ENCODE measurements at regions of chr5 and their contacts with region 1.

Region 1: GRCh38 chr5:172707285-172708182 is 63.5 kb downstream of the DUSP1 start:
- DNase-seq: no peak
- ATAC-seq: peak; percentile 84
- H3K4me3 ChIP-seq: no peak overlapping the region
- H3K27ac ChIP-seq: no peak overlapping the region
- H3K4me1 ChIP-seq: no peaks in the 10 kb centered on the region
- H3K27me3 ChIP-seq: no peaks in the 10 kb centered on the region
- CTCF ChIP-seq: peak; percentile 35 to 63 (median 52); a peak in 4 of 6 replicates
- EP300 ChIP-seq: no peak
- POLR2A ChIP-seq: no peak
- RAD21 ChIP-seq: peak; percentile 57

Region 2: DNA sequence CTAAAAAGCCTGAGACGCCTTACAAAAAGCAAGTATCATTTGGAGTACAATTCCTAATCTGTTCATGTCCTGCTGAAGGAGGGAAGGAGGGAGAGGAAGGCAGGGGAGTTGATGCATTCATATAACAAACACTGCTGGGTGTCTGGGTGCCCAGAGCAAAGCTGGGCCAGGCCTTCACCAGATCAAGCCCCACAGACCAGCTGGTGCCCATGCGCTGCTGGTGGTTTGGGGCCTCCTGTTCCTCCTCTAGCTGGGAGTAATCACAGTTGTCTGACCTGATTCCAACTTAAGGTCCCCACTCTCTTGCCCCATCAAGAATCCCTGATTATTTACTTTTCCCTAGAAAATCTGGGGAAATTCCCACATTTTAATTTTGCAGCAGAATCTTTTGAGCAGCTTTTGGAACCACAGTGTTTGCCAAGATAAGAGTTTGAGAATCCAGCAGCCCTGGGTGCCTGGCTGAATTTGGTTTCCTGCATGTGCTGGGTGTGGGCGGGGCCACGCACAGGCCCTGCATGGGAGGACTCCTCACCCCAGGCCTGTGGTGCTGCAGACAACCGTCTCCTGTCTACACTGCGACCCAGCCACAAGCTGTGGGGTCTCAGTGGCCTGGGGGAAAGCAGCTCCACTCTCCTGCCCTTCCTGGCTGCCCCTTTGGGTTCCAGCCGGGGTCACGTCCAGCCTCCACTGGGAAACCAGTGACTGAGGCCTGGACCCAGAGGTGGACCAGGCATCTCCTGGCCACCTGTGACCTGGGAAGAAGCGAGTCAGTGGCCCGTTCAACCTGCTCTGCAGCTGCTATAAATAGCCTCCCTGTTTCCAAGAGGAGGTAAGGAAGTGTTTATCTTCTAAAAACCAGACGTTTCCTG is 19.0 kb before region 1 on chr5:
- CTCF ChIA-PET with region 1: no interaction called
- POLR2A ChIA-PET with region 1: no interaction called
- RAD21 ChIA-PET with region 1: no interaction called
- SMC1A ChIA-PET with region 1: no interaction called
- in situ Hi-C with region 1: no loop called
- intact Hi-C with region 1: no loop called
- DNase-seq: no peak
- ATAC-seq: peak; percentile 46; the same call in 2 of the 3 replicates
- H3K4me3 ChIP-seq: no peak overlapping the region
- H3K27ac ChIP-seq: no peak overlapping the region
- H3K4me1 ChIP-seq: peaks cover 30% of the 10 kb centered on the region
- H3K27me3 ChIP-seq: no peaks in the 10 kb centered on the region
- CTCF ChIP-seq: no peak
- EP300 ChIP-seq: no peak
- POLR2A ChIP-seq: no peak; the same call in 1 of the 2 replicates
- RAD21 ChIP-seq: no peak

Region 3: DNA sequence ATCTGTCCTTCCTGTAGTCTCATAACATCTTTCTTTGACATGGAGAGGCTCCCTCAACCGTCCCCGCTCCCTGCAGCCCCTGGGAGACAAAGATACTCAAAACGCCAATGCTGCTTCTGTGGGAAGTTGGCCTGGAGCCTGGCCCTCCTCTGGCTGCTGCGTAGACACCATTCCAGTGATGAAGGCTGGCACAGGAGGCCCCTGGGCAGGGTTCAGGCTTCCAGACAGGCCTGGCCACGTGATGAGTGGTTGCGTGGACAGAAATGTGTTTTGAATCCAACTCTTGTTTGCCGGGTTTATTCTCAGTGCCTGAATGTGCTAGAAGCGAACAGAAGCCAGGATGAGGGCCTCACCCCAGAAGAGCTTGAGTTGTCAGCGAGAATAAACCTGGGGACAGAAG is 570.6 kb after region 1 on chr5:
- CTCF ChIA-PET with region 1: no interaction called
- POLR2A ChIA-PET with region 1: no interaction called
- RAD21 ChIA-PET with region 1: no interaction called
- SMC1A ChIA-PET with region 1: no interaction called
- in situ Hi-C with region 1: no loop called
- intact Hi-C with region 1: loop called (anchors 10 kb)
- DNase-seq: no peak
- ATAC-seq: no peak
- H3K4me3 ChIP-seq: no peak overlapping the region
- H3K27ac ChIP-seq: no peak overlapping the region
- H3K4me1 ChIP-seq: no peaks in the 10 kb centered on the region
- H3K27me3 ChIP-seq: peaks cover 0 to 2% of the 10 kb centered on the region in 2 experiments; a peak in 1 of 4 replicates
- CTCF ChIP-seq: no peak
- EP300 ChIP-seq: no peak
- POLR2A ChIP-seq: no peak
- RAD21 ChIP-seq: no peak